HepG2 (cell line): ENCODE measurements at regions of chr2 and their contacts with region 1.

Region 1: GRCh38 chr2:157055660-157056199 is 201.8 kb upstream of the GALNT5 start:
- DNase-seq: peak; percentile 27
- ATAC-seq: no peak
- H3K4me3 ChIP-seq: no peak overlapping the region
- H3K27ac ChIP-seq: no peak overlapping the region
- H3K4me1 ChIP-seq: peaks cover 13% of the 10 kb centered on the region
- H3K27me3 ChIP-seq: no peaks in the 10 kb centered on the region
- CTCF ChIP-seq: peak; percentile 18; the same call in 1 of the 2 replicates
- EP300 ChIP-seq: no peak
- POLR2A ChIP-seq: no peak
- RAD21 ChIP-seq: no peak

Region 2: GRCh38 chr2:155368934-155369333 is 1686.8 kb before region 1 on chr2:
- CTCF ChIA-PET with region 1: no interaction called
- POLR2A ChIA-PET with region 1: no interaction called
- in situ Hi-C with region 1: no loop called
- intact Hi-C with region 1: loop called (anchors 2 kb)
- DNase-seq: peak; percentile 12
- ATAC-seq: peak; percentile 44; the same call in 2 of the 3 replicates
- H3K4me3 ChIP-seq: no peak overlapping the region
- H3K27ac ChIP-seq: no peak overlapping the region
- H3K4me1 ChIP-seq: no peaks in the 10 kb centered on the region
- H3K27me3 ChIP-seq: no peaks in the 10 kb centered on the region
- CTCF ChIP-seq: peak; percentile 33; the same call in 1 of the 2 replicates
- EP300 ChIP-seq: no peak
- POLR2A ChIP-seq: no peak
- RAD21 ChIP-seq: no peak

Region 3: GRCh38 chr2:156341452-156342253 is 714.1 kb before region 1 on chr2:
- CTCF ChIA-PET with region 1: no interaction called
- POLR2A ChIA-PET with region 1: no interaction called
- in situ Hi-C with region 1: loop called (anchors 10 kb)
- intact Hi-C with region 1: loop called (anchors 10 kb)
- DNase-seq: peak; percentile 52
- ATAC-seq: peak; percentile 82
- H3K4me3 ChIP-seq: peak overlapping the region; percentile 72 to 78 (median 77)
- H3K27ac ChIP-seq: no peak overlapping the region
- H3K4me1 ChIP-seq: peaks cover 14% of the 10 kb centered on the region
- H3K27me3 ChIP-seq: peaks cover 3 to 37% of the 10 kb centered on the region in 2 experiments; a peak in 3 of 5 replicates
- CTCF ChIP-seq: no peak
- EP300 ChIP-seq: no peak
- POLR2A ChIP-seq: no peak
- RAD21 ChIP-seq: no peak

Region 4: GRCh38 chr2:156598581-156598980 is 457.1 kb before region 1 on chr2:
- CTCF ChIA-PET with region 1: no interaction called
- POLR2A ChIA-PET with region 1: no interaction called
- in situ Hi-C with region 1: no loop called
- intact Hi-C with region 1: loop called (anchors 5 kb)
- DNase-seq: no peak
- ATAC-seq: no peak
- H3K4me3 ChIP-seq: no peak overlapping the region
- H3K27ac ChIP-seq: no peak overlapping the region
- H3K4me1 ChIP-seq: 0 out of 2 replicates have a peak, but pooled peaks cover 3% of the 10 kb centered on the region
- H3K27me3 ChIP-seq: no peaks in the 10 kb centered on the region
- CTCF ChIP-seq: no peak
- EP300 ChIP-seq: no peak
- POLR2A ChIP-seq: no peak
- RAD21 ChIP-seq: no peak

Region 5: GRCh38 chr2:156892467-156893281 is 163.1 kb before region 1 on chr2:
- CTCF ChIA-PET with region 1: no interaction called
- POLR2A ChIA-PET with region 1: no interaction called
- in situ Hi-C with region 1: no loop called
- intact Hi-C with region 1: loop called (anchors 2 kb)
- DNase-seq: peak; percentile 34
- ATAC-seq: peak; percentile 96
- H3K4me3 ChIP-seq: no peak overlapping the region
- H3K27ac ChIP-seq: no peak overlapping the region
- H3K4me1 ChIP-seq: 0 out of 2 replicates have a peak, but pooled peaks cover 4% of the 10 kb centered on the region
- H3K27me3 ChIP-seq: peaks cover 0 to 3% of the 10 kb centered on the region in 2 experiments; a peak in 1 of 5 replicates
- CTCF ChIP-seq: peak; percentile 75
- EP300 ChIP-seq: no peak
- POLR2A ChIP-seq: no peak
- RAD21 ChIP-seq: no peak